Activated CD8-positive, alpha-beta T cell treated with anti-CD3 and anti-CD28 coated beads for 36 hours (primary cell): ENCODE measurements at regions of chr16 and their contacts with region 1.

Region 1: DNA sequence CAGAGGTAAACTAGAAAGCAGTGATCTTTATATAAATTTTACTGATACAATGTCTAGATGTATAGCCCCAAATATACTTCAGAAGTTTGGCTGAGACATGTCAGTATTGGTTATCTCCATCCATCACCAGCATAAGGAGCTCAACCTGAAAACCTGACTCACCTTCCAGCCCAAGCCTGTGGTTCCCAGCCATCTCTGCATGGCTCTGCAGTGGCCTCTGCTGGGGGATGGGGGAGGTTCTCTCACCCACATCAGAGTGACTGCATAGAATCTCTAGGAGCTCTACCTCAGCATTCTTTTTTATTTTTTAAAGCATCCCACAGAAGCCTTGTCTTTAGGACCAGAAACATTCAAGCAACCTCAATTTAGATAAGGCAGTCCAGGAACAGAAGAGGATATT is 27.3 kb downstream of the USP7 start:
- DNase-seq: peak; percentile 91
- ATAC-seq: peak; percentile 100
- H3K4me3 Mint-ChIP-seq: no peak overlapping the region
- H3K27ac Mint-ChIP-seq: peak overlapping the region; percentile 66
- H3K4me1 Mint-ChIP-seq: peaks cover 79% of the 10 kb centered on the region
- H3K27me3 Mint-ChIP-seq: no peaks in the 10 kb centered on the region
- CTCF ChIP-seq: peak; percentile 79

Region 2: GRCh38 chr16:8868416-8869211 is 67.8 kb before region 1 on chr16 and contains the start of gene CARHSP1:
- CTCF ChIA-PET with region 1: interaction called, 10 read pairs
- POLR2A ChIA-PET with region 1: interaction called, 3 read pairs
- intact Hi-C with region 1: no loop called
- DNase-seq: peak; percentile 87
- ATAC-seq: peak; percentile 79
- H3K4me3 Mint-ChIP-seq: peak within 1 kb of the TSS; percentile 93
- H3K27ac Mint-ChIP-seq: peak within 1 kb of the TSS; percentile 94
- H3K4me1 Mint-ChIP-seq: peaks cover 47% of the 10 kb centered on the region
- H3K27me3 Mint-ChIP-seq: no peaks in the 10 kb centered on the region
- CTCF ChIP-seq: no peak
- total RNA-seq, gene CARHSP1: 63.9 to 72.6 TPM

Region 3: GRCh38 chr16:8892101-8892575 is 44.3 kb before region 1 on chr16:
- CTCF ChIA-PET with region 1: interaction called, 29 read pairs
- POLR2A ChIA-PET with region 1: no interaction called
- intact Hi-C with region 1: no loop called
- DNase-seq: no peak
- ATAC-seq: peak; percentile 24
- H3K4me3 Mint-ChIP-seq: no peak overlapping the region
- H3K27ac Mint-ChIP-seq: peak overlapping the region; percentile 82
- H3K4me1 Mint-ChIP-seq: peaks cover 3% of the 10 kb centered on the region
- H3K27me3 Mint-ChIP-seq: no peaks in the 10 kb centered on the region
- CTCF ChIP-seq: no peak

Region 4: GRCh38 chr16:8907096-8907495 is 29.3 kb before region 1 on chr16:
- CTCF ChIA-PET with region 1: interaction called, 29 read pairs
- POLR2A ChIA-PET with region 1: no interaction called
- intact Hi-C with region 1: no loop called
- DNase-seq: no peak
- ATAC-seq: no peak
- H3K4me3 Mint-ChIP-seq: no peak overlapping the region
- H3K27ac Mint-ChIP-seq: peak overlapping the region; percentile 19
- H3K4me1 Mint-ChIP-seq: peaks cover 15% of the 10 kb centered on the region
- H3K27me3 Mint-ChIP-seq: no peaks in the 10 kb centered on the region
- CTCF ChIP-seq: no peak

Region 5: DNA sequence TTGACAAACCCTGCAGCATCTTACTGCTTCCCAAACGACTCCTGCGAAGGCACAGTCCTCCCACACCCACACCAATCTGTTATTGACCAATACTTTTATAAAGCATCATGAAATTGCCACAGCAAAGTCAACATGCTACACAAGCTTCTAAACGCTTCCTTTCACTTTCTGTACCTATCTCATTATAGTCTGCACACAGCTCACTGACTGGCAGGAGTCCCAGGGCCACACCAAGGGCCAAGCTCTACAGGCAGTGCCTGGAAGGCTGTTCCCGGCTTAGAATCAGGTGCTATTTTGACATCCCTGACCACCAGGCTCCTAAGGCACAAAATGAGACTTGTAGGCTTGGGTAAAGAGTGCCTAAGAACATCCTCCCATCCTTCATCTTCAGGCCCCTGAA is 12.2 kb before region 1 on chr16:
- CTCF ChIA-PET with region 1: interaction called, 23 read pairs
- POLR2A ChIA-PET with region 1: interaction called, 3 read pairs
- intact Hi-C with region 1: no loop called
- DNase-seq: no peak
- ATAC-seq: no peak
- H3K4me3 Mint-ChIP-seq: no peak overlapping the region
- H3K27ac Mint-ChIP-seq: peak overlapping the region; percentile 53
- H3K4me1 Mint-ChIP-seq: peaks cover 77% of the 10 kb centered on the region
- H3K27me3 Mint-ChIP-seq: no peaks in the 10 kb centered on the region
- CTCF ChIP-seq: no peak

Region 6: GRCh38 chr16:8958344-8959167 is 22.1 kb after region 1 on chr16:
- CTCF ChIA-PET with region 1: interaction called, 13 read pairs
- POLR2A ChIA-PET with region 1: interaction called, 5 read pairs
- intact Hi-C with region 1: no loop called
- DNase-seq: peak; percentile 56
- ATAC-seq: peak; percentile 17
- H3K4me3 Mint-ChIP-seq: peak overlapping the region; percentile 83
- H3K27ac Mint-ChIP-seq: peak overlapping the region; percentile 73
- H3K4me1 Mint-ChIP-seq: peaks cover 72% of the 10 kb centered on the region
- H3K27me3 Mint-ChIP-seq: no peaks in the 10 kb centered on the region
- CTCF ChIP-seq: no peak

Region 7: GRCh38 chr16:9134739-9135138 is 198.3 kb after region 1 on chr16:
- CTCF ChIA-PET with region 1: interaction called, 20 read pairs
- POLR2A ChIA-PET with region 1: interaction called, 5 read pairs
- intact Hi-C with region 1: no loop called
- DNase-seq: peak; percentile 83
- ATAC-seq: peak; percentile 93
- H3K4me3 Mint-ChIP-seq: no peak overlapping the region
- H3K27ac Mint-ChIP-seq: no peak overlapping the region
- H3K4me1 Mint-ChIP-seq: peaks cover 26% of the 10 kb centered on the region
- H3K27me3 Mint-ChIP-seq: no peaks in the 10 kb centered on the region
- CTCF ChIP-seq: peak; percentile 84